Naive thymus-derived CD4-positive, alpha-beta T cell (primary cell): ENCODE measurements at regions of chr7 and their contacts with region 1.

Region 1: DNA sequence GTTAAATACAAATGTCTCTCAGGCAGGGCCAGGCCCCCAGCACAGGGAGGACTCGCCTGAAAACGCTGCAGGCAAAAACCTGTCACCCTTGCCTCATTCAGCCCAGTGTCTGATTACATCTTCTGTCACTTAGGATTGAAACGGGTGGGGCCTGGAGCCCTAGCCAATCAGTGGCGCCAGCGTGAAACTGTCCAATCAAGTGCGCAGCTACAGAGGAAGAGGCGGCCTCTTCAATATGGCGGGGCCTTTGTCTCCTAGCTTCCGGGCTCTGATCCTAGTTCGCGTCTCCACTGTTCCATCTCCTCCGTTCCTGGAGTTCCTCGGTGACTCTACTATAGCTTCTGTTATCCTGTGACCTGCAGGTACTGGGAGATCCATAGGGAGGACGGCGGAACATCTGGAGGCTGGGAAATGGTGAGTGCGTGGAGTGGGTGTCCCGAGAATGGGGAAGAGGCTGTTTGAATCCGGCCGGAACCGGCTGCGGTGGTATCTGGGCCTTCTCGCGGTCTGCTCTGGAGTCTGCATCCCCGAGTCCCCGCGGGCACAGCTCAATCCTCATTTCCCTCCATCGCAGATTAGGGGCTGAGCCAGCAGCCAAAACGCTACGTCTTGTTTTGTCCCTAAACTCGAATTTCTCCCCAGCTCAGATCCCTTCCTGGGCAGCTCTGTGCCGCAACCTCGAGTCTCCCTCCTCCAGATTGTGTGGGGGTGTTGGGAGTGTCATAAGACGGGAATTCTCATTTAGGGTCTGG is at the start of gene ZNF736:
- DNase-seq: peak; percentile 64 to 92 (median 87)
- ATAC-seq: peak; percentile 100
- H3K4me3 ChIP-seq: peak within 1 kb of the TSS; percentile 81
- H3K4me3 Mint-ChIP-seq: peak within 1 kb of the TSS; percentile 90 to 100 (median 98)
- H3K27ac ChIP-seq: peak within 1 kb of the TSS; percentile 88
- H3K27ac Mint-ChIP-seq: peak within 1 kb of the TSS; percentile 88 to 100 (median 97)
- H3K4me1 ChIP-seq: peaks cover 8 to 12% of the 10 kb centered on the region in 2 donors
- H3K4me1 Mint-ChIP-seq: peaks cover 22 to 54% (median 39%) of the 10 kb centered on the region in 7 donors
- H3K27me3 ChIP-seq: no peaks in the 10 kb centered on the region
- H3K27me3 Mint-ChIP-seq: no peaks in the 10 kb centered on the region
- total RNA-seq, gene ZNF736: 22.8 to 54.2 (median 35.8) TPM

Region 2: DNA sequence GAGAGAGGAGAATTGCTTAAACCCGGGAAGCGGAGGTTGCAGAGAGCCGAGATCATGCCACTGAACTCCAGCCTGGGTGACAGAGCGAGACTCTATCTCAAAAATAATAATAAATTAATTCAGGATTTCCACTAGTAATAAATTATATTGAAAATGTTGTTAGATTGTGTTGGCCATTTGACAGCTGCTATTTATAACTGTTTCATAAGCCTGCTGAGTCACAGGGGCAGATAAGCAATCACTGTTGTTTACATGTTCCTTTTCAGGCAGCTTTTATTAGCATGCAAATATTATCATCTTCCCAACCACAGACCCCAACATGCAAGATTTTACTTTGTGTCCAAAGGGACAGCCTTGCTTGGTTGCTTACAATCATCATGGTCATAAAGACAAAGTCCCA is 430.8 kb after region 1 on chr7:
- CTCF ChIA-PET with region 1: no interaction called
- POLR2A ChIA-PET with region 1: no interaction called
- intact Hi-C with region 1: no loop called
- DNase-seq: no peak
- ATAC-seq: no peak
- H3K4me3 ChIP-seq: no peak overlapping the region
- H3K4me3 Mint-ChIP-seq: no peak overlapping the region
- H3K27ac ChIP-seq: no peak overlapping the region
- H3K27ac Mint-ChIP-seq: no peak overlapping the region
- H3K4me1 ChIP-seq: no peaks in the 10 kb centered on the region
- H3K4me1 Mint-ChIP-seq: no peaks in the 10 kb centered on the region
- H3K27me3 ChIP-seq: no peaks in the 10 kb centered on the region
- H3K27me3 Mint-ChIP-seq: no peaks in the 10 kb centered on the region

Region 3: GRCh38 chr7:66204822-66205740 is 1891.2 kb after region 1 on chr7 and contains the start of gene TPST1:
- CTCF ChIA-PET with region 1: no interaction called
- POLR2A ChIA-PET with region 1: no interaction called
- intact Hi-C with region 1: loop called in 1 of 2 experiments (anchors 5 kb)
- DNase-seq: peak; percentile 69 to 83 (median 78)
- ATAC-seq: peak; percentile 94
- H3K4me3 ChIP-seq: peak within 1 kb of the TSS; percentile 49
- H3K4me3 Mint-ChIP-seq: peak within 1 kb of the TSS; percentile 90 to 98 (median 92)
- H3K27ac ChIP-seq: peak within 1 kb of the TSS; percentile 60
- H3K27ac Mint-ChIP-seq: peak within 1 kb of the TSS in 8 of 9 donors; percentile 75 to 91 (median 83)
- H3K4me1 ChIP-seq: peaks cover 0 to 30% of the 10 kb centered on the region in 2 donors
- H3K4me1 Mint-ChIP-seq: peaks cover 26 to 57% (median 46%) of the 10 kb centered on the region in 7 donors
- H3K27me3 ChIP-seq: no peaks in the 10 kb centered on the region
- H3K27me3 Mint-ChIP-seq: peaks cover 0 to 48% (median 6%) of the 10 kb centered on the region in 5 donors
- total RNA-seq, gene TPST1: 0.70 to 5.0 (median 2.7) TPM